Adrenal gland (tissue), 19 donors: ENCODE measurements at regions of chr19 and their contacts with region 1.

Region 1: DNA sequence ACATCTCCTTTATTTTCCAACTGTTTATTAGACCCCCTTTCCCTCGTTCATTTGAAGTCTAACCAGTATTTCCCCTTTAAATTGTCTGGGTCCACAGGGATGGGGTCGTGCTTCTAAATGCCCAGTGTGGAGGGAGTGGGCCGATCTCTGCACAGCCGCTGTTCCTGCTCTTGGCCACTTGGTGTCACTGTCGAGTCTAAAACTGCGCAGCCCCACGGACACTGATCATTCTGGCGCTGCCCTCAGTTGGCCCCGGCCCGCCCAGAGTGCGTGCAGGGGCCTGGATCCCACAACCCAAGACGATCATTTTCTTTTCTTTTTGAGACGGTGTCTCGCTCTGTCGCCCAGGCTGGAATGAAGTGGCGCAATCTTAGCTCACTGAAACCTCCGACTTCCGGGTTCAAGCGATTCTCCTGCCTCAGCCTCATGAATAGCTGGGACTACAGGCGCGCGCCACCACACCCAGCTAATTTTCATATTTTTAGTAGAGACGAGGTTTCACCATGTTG is 12.0 kb downstream of the WDR88 start:
- DNase-seq: peak; percentile 37 to 77 (median 60)
- H3K4me3 ChIP-seq: no peak overlapping the region
- H3K27ac ChIP-seq: no peak overlapping the region
- H3K4me1 ChIP-seq: no peaks in the 10 kb centered on the region
- H3K27me3 ChIP-seq: no peaks in the 10 kb centered on the region
- CTCF ChIP-seq: peak; percentile 85 to 96 (median 90)
- POLR2A ChIP-seq: no peak

Region 2: DNA sequence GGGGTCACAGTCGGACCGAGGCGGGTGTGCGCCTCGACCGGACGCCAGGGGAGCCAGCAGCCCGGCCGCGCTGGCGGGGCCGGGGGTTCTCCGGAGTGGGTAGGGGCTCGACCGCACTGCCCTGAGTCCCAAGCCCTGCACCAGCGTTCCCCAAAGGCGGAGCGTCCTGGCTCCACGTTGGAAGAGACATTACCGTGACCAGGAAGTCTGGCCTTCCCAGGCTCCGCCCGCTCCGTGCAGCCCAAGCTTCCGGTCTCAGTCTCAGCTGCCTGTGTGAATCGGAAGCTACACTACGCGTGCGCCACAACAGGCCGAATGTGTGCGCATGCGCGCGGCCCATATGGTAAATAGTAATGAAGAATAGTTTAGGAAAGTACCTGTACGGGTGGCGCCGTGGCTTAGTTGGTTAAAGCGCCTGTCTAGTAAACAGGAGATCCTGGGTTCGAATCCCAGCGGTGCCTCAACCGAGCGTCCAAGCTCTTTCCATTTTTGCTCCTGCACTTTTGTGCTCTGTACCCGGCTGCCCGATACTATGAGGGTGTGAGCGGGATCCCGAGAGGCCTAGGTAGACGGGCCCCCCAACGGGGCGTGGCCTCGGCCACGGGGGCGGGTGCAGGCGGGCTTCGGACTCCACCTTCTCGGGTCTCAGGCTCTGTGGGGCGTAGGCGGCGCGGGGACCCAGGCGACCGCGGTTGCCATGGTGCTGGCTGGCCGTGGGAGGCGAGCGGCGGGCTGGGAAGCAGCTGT is 32.9 kb after region 1 on chr19:
- intact Hi-C with region 1: loop called in 1 of 2 experiments (anchors 5 kb)
- DNase-seq: peak; percentile 95 to 99 (median 98)
- H3K4me3 ChIP-seq: peak overlapping the region; percentile 55 to 88 (median 78)
- H3K27ac ChIP-seq: peak overlapping the region; percentile 87 to 95 (median 90)
- H3K4me1 ChIP-seq: peaks cover 10 to 20% of the 10 kb centered on the region in 2 donors
- H3K27me3 ChIP-seq: no peaks in the 10 kb centered on the region
- CTCF ChIP-seq: peak in 3 of 6 experiments; percentile 20 to 53 (median 48)
- POLR2A ChIP-seq: peak; percentile 55 to 93

Region 3: DNA sequence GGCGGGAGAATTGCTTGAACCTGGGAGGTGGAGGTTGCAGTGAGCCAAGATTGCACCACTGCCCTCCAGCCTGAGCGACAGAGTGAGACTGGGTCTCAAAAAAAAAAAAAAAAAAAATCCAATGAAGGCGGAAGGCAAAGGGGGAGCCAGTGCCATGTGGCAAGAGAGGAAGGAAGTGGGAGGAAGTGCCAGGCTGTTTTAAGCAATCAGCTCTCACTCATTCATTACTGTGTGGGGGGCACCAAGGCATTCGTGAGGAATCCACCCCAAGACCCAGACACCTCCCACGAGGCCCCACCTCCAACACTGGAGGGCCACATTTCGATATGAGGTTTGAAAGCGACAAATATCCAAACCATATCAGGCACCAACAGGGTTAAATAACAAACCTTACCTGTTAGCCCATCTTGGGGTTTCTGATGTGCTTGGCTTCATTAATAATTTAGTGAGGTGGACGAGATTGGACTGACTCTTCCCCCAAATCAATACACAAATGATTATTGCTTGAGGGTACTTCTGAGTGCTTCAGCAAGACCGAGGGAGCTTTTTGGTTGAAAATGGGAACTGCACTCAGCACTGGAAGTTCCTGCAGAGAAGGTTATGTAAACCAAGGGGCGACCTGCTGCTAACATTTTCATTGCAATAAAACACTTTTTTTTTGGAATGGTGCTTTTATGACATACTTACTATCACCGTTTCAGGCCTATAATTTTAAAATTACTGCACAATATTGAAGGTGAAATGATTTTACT is 42.7 kb after region 1 on chr19:
- intact Hi-C with region 1: loop called (anchors 5 kb)
- DNase-seq: peak in 2 of 7 donors; percentile 6 to 7
- H3K4me3 ChIP-seq: no peak overlapping the region
- H3K27ac ChIP-seq: no peak overlapping the region
- H3K4me1 ChIP-seq: peaks cover 0 to 2% of the 10 kb centered on the region in 2 donors
- H3K27me3 ChIP-seq: no peaks in the 10 kb centered on the region
- CTCF ChIP-seq: no peak
- POLR2A ChIP-seq: no peak

Region 4: GRCh38 chr19:33406521-33407139 is 262.7 kb after region 1 on chr19:
- intact Hi-C with region 1: loop called in 1 of 2 experiments (anchors 10 kb)
- DNase-seq: peak; percentile 52 to 87 (median 72)
- H3K4me3 ChIP-seq: no peak overlapping the region
- H3K27ac ChIP-seq: no peak overlapping the region
- H3K4me1 ChIP-seq: no peaks in the 10 kb centered on the region
- H3K27me3 ChIP-seq: no peaks in the 10 kb centered on the region
- CTCF ChIP-seq: peak; percentile 90 to 96 (median 92)
- POLR2A ChIP-seq: no peak